ENCODE measurements at regions of chr10 and their contacts with region 1.

Region 1: GRCh38 chr10:50497757-50498156 is 126.0 kb downstream of the SGMS1 start:
- DNase-seq: peak; percentile 59
- CTCF ChIP-seq: no peak

Region 2: GRCh38 chr10:50456719-50457118 is 41.0 kb before region 1 on chr10:
- CTCF ChIA-PET with region 1: interaction called, 13 read pairs
- POLR2A ChIA-PET with region 1: no interaction called
- DNase-seq: peak; percentile 23
- CTCF ChIP-seq: no peak

Region 3: GRCh38 chr10:50624866-50625692 is 127.3 kb after region 1 on chr10:
- CTCF ChIA-PET with region 1: no interaction called
- POLR2A ChIA-PET with region 1: no interaction called
- DNase-seq: peak; percentile 85
- CTCF ChIP-seq: peak; percentile 69

Region 4: DNA sequence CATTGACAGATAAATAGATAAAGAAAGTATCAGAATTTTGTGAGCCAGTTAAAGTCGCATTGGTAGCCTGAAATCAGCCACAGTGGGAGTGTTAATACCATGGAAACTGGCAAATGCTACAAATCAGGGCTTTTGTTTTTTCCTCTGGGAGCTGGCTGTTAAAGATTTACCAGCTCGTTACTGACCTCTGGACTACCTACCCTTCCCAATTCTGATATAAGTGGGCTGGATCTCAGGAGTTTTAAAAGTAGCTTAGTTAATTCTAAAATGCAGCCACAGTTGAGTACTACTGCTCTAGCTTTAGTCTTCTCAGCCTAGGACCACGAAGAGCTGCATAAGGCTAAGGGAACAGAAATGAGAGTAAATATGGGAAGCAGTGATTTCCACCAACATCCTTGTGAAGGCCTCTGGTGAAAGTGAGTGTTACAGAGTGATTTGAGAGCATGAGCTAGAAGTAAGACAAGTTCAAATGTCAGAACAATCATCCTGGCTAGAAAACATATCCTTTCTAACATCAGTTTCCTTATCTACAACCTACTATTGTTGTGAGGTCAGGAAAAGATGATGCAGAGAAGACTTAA is 334.5 kb after region 1 on chr10:
- CTCF ChIA-PET with region 1: no interaction called
- POLR2A ChIA-PET with region 1: no interaction called
- DNase-seq: no peak
- CTCF ChIP-seq: no peak

Region 5: DNA sequence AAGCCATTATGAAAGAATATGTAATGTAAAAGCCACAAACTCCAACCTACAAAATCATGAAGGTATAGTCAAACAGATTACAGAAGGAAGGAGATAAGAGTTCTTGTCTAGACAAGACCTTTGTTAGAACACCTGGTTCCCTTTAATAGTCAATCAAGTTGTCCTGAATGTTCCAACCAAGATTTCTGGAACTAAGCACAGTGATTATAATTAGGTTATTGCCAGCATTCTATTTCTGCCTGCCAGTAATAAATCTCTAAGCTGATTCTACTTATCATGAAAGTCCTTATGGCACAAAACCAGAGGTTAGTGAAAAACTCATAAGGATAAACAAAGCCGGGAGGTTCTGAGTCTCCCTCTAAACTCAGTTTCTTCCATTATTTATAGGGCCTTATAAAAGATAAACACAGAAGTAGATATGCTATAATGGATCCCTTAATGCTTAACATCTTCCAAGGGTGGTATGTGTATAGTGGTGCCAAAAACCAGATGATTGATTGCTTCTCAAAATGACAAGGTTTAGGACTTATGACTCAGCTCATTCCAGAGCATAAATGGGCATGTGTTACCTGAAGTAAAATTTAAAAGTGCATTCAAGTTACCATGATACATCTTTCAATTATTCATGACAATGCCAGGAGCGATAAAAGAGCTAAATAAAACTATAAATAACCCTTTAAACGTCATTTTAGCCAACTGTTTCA is 964.5 kb after region 1 on chr10:
- CTCF ChIA-PET with region 1: no interaction called
- POLR2A ChIA-PET with region 1: no interaction called
- DNase-seq: no peak
- CTCF ChIP-seq: no peak